ENCODE measurements at regions of chr16 and their contacts with region 1.

Region 1: DNA sequence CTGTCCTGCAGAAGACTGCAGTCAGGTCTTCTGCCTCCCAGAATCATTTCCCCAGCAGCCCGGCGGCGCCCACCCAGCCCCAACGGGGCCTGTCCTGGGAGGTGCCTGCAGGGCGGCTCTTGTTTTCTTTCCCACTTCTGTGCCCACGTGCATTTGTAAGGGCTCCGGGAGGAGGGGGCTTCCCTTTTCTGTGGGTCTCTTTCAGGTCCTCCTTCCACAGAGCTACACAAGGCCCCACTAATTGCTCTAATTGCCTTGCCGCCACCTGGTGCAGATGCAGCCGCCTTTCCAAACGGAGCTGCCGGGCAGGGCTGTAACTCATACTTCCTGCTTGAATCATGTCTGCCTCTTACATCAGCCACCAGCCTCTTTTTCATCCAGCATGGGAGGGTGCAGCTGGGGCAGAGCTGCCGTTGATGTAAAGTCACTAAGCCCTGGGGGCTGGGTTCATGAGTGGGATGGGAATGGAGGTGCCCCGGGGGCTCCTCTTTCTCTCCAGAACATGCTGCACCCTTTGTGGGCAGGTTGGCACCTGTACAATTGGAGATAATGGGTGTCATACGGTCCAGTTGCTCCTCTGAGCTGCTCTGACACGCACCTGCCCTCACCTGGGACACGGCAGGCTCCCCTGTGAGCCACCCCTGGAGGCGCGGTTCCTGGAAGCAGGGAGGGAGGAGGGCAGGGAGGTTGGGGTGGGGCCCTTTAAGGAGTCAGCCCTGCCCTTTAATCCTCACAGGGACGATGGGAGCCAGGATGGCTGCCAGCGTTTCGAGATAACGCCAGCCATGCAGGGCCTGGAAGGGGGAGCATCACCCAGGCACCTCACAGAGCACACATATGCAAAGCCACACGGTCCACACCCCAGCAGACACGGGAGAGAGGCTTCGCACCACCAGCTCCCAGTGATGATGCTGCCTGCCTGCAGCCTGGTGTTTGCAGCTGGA is 41.1 kb upstream of the KLHDC4 start:
- DNase-seq: peak; percentile 55
- ATAC-seq: peak; percentile 43
- H3K4me3 Mint-ChIP-seq: peak overlapping the region; percentile 75
- H3K27ac Mint-ChIP-seq: peak overlapping the region; percentile 95
- H3K4me1 Mint-ChIP-seq: peaks cover 74% of the 10 kb centered on the region
- H3K27me3 Mint-ChIP-seq: no peaks in the 10 kb centered on the region
- CTCF ChIP-seq: no peak

Region 2: DNA sequence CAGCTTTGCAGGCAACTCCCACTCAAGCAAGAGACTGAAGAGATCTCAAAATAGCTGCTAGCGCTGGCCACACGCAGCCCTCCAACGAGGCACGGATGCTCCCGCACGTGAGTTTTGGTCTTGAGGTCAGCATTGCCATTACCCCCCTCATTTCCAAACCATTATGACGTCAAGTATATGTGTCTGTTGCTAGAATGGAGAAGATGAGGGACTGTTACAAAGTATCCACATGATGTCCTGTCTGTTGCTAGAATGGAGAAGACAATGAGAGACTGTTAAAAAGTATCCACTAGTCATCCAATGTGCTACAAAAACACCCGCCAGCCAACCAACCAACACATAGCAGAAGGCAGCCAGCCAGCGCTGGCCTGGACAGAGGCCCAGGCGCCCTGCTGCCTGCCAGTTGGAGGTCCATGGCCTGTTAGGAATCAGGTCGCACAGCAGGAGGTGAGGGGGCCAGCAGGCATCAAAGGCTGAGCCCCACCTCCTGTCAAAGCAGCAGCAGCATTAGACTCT is 65.9 kb before region 1 on chr16:
- CTCF ChIA-PET with region 1: no interaction called
- POLR2A ChIA-PET with region 1: no interaction called
- intact Hi-C with region 1: no loop called
- DNase-seq: no peak
- ATAC-seq: no peak
- H3K4me3 Mint-ChIP-seq: no peak overlapping the region
- H3K27ac Mint-ChIP-seq: no peak overlapping the region
- H3K4me1 Mint-ChIP-seq: no peaks in the 10 kb centered on the region
- H3K27me3 Mint-ChIP-seq: no peaks in the 10 kb centered on the region
- CTCF ChIP-seq: no peak

Region 3: DNA sequence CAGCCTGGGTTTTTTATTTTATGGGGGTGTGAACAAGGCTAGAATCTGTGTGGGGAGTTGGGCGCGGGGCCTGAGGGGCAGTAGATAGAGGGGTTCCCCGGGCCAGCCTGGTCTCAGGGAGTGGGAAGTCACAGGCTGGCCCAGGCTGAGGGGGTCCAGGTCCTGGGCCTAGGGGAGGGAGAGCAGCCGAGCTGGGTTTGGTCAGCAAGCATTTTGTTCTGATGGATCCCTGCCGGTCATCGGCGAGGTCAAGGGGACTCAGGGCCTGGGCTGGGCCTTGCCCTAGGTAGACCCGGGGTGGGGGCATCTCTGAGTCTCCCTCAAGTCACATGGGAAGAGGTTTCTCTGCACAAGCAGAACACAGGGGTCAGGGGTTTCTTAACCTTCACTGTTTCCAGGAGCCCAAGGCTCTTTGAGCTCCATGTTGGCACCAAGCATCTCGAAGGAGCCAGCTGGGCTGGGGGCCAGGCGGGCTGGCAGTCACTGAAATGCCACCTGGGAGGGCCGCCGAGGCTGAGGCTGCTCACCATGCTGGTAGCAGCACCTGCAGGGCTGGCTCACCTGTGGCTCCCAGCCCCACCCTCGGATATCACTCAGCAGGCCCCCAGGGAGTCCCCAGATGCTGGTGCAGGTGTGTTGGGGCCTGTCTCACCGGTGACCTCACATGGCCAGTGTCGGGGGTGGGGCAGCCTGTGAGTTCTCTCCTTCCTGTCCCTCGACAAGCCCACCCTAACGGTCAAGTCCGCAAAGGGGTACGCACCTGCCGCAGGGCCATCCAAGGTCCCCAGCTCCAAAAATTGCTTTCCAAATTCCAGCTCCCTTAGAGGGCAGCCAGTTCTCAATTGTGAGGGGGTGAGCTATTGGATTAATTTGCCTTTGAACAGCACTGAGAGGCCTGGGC is 21.4 kb after region 1 on chr16:
- CTCF ChIA-PET with region 1: interaction called, 8 read pairs
- POLR2A ChIA-PET with region 1: interaction called, 39 read pairs
- intact Hi-C with region 1: loop called (anchors 1 kb)
- DNase-seq: no peak
- ATAC-seq: no peak
- H3K4me3 Mint-ChIP-seq: no peak overlapping the region
- H3K27ac Mint-ChIP-seq: no peak overlapping the region
- H3K4me1 Mint-ChIP-seq: peaks cover 25% of the 10 kb centered on the region
- H3K27me3 Mint-ChIP-seq: peaks cover 1% of the 10 kb centered on the region
- CTCF ChIP-seq: no peak

Region 4: GRCh38 chr16:87853411-87854052 is 46.7 kb after region 1 on chr16:
- CTCF ChIA-PET with region 1: interaction called, 11 read pairs
- POLR2A ChIA-PET with region 1: interaction called, 21 read pairs
- intact Hi-C with region 1: loop called (anchors 1 kb)
- DNase-seq: peak; percentile 73
- ATAC-seq: peak; percentile 76
- H3K4me3 Mint-ChIP-seq: peak overlapping the region; percentile 70
- H3K27ac Mint-ChIP-seq: peak overlapping the region; percentile 71
- H3K4me1 Mint-ChIP-seq: peaks cover 44% of the 10 kb centered on the region
- H3K27me3 Mint-ChIP-seq: no peaks in the 10 kb centered on the region
- CTCF ChIP-seq: no peak

Region 5: DNA sequence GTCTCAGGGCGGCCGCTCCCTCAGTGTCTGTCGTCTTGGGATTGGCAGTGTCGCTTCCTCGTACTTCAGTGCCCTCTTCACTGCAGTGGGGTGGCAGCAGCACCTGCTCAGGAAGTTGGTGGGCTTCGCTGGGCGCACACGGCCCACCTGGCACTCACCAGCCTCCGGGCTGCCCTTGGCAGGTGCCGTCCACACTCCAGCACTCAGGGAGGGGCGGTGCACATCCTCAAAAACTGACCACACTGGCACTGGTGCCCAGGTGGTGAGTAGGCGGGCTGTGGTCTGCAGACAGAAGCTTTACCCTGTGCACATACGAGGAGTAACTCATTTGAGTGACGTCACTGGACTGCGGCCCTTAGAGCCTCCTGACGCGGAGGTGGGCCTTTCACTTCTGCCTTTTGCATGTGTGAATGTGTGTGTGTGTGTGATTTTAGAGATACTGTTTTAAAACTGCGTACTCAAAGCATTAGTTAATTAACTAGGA is 239.0 kb after region 1 on chr16:
- CTCF ChIA-PET with region 1: no interaction called
- POLR2A ChIA-PET with region 1: interaction called, 8 read pairs
- intact Hi-C with region 1: loop called (anchors 1 kb)
- DNase-seq: peak; percentile 83
- ATAC-seq: peak; percentile 72
- H3K4me3 Mint-ChIP-seq: peak overlapping the region; percentile 77
- H3K27ac Mint-ChIP-seq: peak overlapping the region; percentile 98
- H3K4me1 Mint-ChIP-seq: peaks cover 83% of the 10 kb centered on the region
- H3K27me3 Mint-ChIP-seq: no peaks in the 10 kb centered on the region
- CTCF ChIP-seq: no peak

Region 6: DNA sequence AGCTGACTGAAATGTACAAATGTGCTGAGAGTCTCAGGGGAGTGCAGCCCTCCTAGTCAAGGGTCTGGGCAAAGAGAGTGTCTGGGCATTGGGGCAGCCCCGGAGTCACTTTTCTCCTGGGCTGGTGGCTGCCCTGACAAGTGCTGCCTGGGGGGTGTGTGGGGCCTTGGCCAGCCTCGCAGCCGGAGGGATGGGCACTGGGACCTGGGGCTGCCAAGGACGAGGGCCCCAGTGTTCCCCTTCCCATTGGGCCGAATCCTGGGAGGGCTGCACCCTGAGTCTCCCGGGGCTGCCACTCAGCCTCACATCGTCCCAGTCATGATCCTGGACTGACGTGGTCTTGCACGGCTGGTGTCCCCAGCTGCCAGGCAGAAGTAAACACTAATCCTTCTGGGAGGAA is 276.7 kb after region 1 on chr16:
- CTCF ChIA-PET with region 1: no interaction called
- POLR2A ChIA-PET with region 1: interaction called, 11 read pairs
- intact Hi-C with region 1: no loop called
- DNase-seq: no peak
- ATAC-seq: no peak
- H3K4me3 Mint-ChIP-seq: no peak overlapping the region
- H3K27ac Mint-ChIP-seq: peak overlapping the region; percentile 38
- H3K4me1 Mint-ChIP-seq: peaks cover 2% of the 10 kb centered on the region
- H3K27me3 Mint-ChIP-seq: no peaks in the 10 kb centered on the region
- CTCF ChIP-seq: no peak